ENCODE measurements at regions of chr15 and their contacts with region 1.

Region 1: DNA sequence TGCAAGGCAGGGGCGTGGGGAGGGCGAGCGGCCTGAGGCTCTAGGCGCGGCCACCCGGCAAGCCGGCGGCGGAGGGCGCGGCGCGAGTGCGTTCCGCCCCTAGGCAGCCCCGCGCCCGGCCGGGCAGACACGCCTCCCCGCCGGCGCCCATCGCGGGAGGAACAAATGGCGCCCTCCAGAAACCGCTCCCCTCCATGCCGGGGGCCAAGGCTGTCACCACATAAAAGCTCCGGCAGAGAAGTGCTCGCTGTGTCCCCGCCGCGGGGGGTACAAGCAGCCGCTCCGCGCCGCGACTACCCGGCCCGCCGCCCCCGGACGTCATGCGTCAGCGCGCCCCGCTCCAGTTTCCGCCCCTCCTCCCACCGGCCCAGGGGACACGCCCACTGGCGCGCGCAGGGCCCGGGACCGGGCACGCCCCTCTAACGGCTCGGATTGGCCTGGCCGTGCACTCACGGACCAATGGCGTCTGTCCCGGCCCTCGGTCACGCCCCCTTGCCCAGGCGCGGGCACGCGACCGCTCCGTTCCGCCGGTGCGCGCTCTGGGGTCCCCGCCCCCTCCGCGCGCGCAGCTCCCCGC is 391 bp upstream of the KLF13 start:
- DNase-seq: peak; percentile 97
- ATAC-seq: peak; percentile 91
- H3K4me3 ChIP-seq: peak overlapping the region; percentile 86
- H3K27ac ChIP-seq: peak overlapping the region; percentile 92
- H3K4me1 ChIP-seq: peaks cover 7% of the 10 kb centered on the region
- H3K27me3 ChIP-seq: peaks cover under 1% of the 10 kb centered on the region; the same call in 1 of the 2 replicates
- CTCF ChIP-seq: no peak; the same call in 1 of the 2 replicates
- POLR2A ChIP-seq: peak; percentile 89; the same call in 1 of the 2 replicates
- RAD21 ChIP-seq: no peak

Region 2: DNA sequence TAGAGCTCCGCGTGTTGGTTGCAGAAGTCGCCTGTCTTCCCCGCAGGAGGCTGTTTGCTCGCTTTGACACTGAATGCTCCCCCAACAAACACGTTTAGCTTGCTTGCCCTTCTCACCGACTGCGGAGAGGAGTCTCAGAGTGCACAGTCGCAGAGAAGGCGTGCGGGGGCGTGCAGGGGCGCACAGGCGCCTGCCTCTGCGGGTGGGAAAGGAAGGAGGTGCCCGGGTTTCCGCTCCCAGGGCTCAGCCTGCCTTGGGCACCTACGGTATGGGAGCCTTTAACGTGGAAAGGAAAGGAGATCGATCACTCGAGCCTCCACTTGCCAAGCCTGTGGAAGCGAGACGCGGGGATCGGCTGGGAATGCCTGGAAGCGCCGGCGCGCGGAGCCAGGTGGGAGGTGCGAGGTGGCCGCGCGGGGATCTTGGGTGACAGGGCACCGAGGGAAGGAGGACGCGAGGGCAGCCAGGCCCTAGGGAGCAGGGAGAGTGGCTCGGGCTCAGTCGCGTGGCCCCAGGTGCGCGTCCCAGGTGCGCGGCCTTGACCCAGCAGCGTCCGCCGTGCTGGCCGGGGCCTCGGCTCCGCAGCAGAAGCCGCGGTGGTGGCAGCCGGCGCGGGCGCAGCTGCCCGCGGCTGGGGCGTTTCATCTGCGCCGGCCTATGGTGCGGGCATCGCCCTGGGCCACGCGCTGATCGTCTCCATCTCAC is 422.6 kb before region 1 on chr15 and contains the start of gene FAN1:
- CTCF ChIA-PET with region 1: no interaction called
- POLR2A ChIA-PET with region 1: no interaction called
- dilution Hi-C with region 1: no loop called
- in situ Hi-C with region 1: no loop called
- intact Hi-C with region 1: loop called (anchors 5 kb)
- DNase-seq: peak; percentile 84
- ATAC-seq: peak; percentile 99
- H3K4me3 ChIP-seq: peak within 1 kb of the TSS; percentile 69
- H3K27ac ChIP-seq: peak within 1 kb of the TSS; percentile 54
- H3K4me1 ChIP-seq: no peaks in the 10 kb centered on the region
- H3K27me3 ChIP-seq: no peaks in the 10 kb centered on the region
- CTCF ChIP-seq: no peak
- POLR2A ChIP-seq: no peak
- RAD21 ChIP-seq: no peak
- total RNA-seq, gene FAN1: 12.4 and 15.0 TPM in 2 replicates

Region 3: DNA sequence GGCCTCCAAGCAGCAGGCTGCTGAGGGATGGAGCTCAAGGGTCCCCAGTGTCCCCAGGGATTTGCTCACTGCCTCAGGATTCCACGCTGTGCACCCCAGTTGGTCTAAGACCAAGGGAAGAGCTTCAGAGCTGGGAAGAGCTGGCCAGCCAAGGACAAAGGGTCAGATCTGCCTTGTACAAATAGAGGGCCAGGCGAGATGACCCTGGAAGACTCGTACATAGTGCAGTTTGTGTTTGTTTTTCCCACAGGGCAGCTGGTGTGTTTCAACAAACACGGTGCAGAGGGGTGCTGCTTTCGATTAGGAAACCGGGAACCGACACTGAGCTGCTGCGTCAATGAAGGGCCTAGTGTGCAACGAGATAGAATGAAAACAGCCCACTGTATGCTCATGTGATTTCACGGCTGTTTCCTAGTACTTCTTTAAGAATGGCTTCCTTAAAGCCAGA is 168.6 kb before region 1 on chr15:
- CTCF ChIA-PET with region 1: no interaction called
- POLR2A ChIA-PET with region 1: no interaction called
- dilution Hi-C with region 1: no loop called
- in situ Hi-C with region 1: no loop called
- intact Hi-C with region 1: no loop called
- DNase-seq: no peak
- ATAC-seq: no peak
- H3K4me3 ChIP-seq: no peak overlapping the region
- H3K27ac ChIP-seq: no peak overlapping the region
- H3K4me1 ChIP-seq: no peaks in the 10 kb centered on the region
- H3K27me3 ChIP-seq: peaks cover 35% of the 10 kb centered on the region
- CTCF ChIP-seq: no peak
- POLR2A ChIP-seq: no peak
- RAD21 ChIP-seq: no peak

Region 4: DNA sequence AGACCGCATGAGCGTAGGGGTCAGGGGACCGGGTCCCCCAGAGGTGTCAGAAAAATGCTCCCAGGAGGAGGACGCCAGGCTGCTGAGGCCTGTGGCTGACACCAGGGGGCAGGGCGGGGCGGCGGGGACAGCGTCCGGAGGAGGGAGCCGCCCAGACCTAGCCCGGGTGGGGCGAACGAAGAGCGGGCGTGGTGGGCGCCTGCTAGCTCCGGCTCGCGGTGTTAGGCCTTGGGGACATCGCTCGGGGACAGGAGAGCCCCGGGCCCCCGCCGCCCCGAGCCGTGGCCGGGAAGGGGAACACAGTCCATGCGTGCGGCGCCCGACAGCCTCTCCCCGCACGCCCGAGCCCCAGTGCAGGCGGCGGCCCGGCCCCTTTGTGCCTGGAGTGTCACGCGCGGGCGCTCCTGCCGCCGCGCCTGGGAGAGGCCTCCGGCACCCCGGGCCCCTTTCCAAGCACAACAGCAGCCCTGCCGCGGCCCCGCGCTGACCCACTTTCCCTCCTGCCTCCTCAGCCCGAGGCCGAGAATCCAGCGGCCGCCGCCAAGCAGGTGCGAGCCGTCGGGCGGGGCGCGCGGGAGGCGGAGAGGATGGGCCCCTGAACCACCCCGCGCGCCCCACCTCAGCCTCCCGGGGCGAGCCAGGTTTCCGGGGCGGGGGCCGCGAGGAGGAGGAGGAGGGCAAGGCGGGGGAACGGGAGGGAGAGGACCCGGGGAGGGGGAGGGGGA is 110.6 kb before region 1 on chr15:
- CTCF ChIA-PET with region 1: no interaction called
- POLR2A ChIA-PET with region 1: no interaction called
- dilution Hi-C with region 1: no loop called
- in situ Hi-C with region 1: no loop called
- intact Hi-C with region 1: loop called (anchors 5 kb)
- DNase-seq: no peak
- ATAC-seq: peak; percentile 94
- H3K4me3 ChIP-seq: peak overlapping the region; percentile 36
- H3K27ac ChIP-seq: no peak overlapping the region
- H3K4me1 ChIP-seq: peaks cover 1% of the 10 kb centered on the region; the same call in 1 of the 2 replicates
- H3K27me3 ChIP-seq: peaks cover 20% of the 10 kb centered on the region
- CTCF ChIP-seq: peak; percentile 66
- POLR2A ChIP-seq: no peak
- RAD21 ChIP-seq: peak; percentile 62

Region 5: GRCh38 chr15:31391687-31392671 is 65.7 kb after region 1 on chr15:
- CTCF ChIA-PET with region 1: no interaction called
- POLR2A ChIA-PET with region 1: no interaction called
- dilution Hi-C with region 1: no loop called
- in situ Hi-C with region 1: no loop called
- intact Hi-C with region 1: loop called (anchors 2 kb)
- DNase-seq: peak; percentile 62
- ATAC-seq: peak; percentile 91
- H3K4me3 ChIP-seq: peak overlapping the region; percentile 97
- H3K27ac ChIP-seq: peak overlapping the region; percentile 70
- H3K4me1 ChIP-seq: peaks cover 6% of the 10 kb centered on the region
- H3K27me3 ChIP-seq: no peaks in the 10 kb centered on the region
- CTCF ChIP-seq: 0 out of 2 replicates have a peak, but pooled peaks have one; percentile 4
- POLR2A ChIP-seq: peak; percentile 72
- RAD21 ChIP-seq: no peak; the same call in 1 of the 2 replicates

Region 6: GRCh38 chr15:31435261-31435911 is 109.1 kb after region 1 on chr15:
- CTCF ChIA-PET with region 1: interaction called, 4 read pairs
- POLR2A ChIA-PET with region 1: no interaction called
- dilution Hi-C with region 1: no loop called
- in situ Hi-C with region 1: no loop called
- intact Hi-C with region 1: loop called (anchors 2 kb)
- DNase-seq: peak; percentile 72
- ATAC-seq: peak; percentile 85
- H3K4me3 ChIP-seq: no peak overlapping the region
- H3K27ac ChIP-seq: peak overlapping the region; percentile 72
- H3K4me1 ChIP-seq: peaks cover 15% of the 10 kb centered on the region
- H3K27me3 ChIP-seq: no peaks in the 10 kb centered on the region
- CTCF ChIP-seq: peak; percentile 77
- POLR2A ChIP-seq: no peak
- RAD21 ChIP-seq: peak; percentile 72

Region 7: GRCh38 chr15:31472636-31473384 is 146.6 kb after region 1 on chr15:
- CTCF ChIA-PET with region 1: no interaction called
- POLR2A ChIA-PET with region 1: no interaction called
- dilution Hi-C with region 1: no loop called
- in situ Hi-C with region 1: no loop called
- intact Hi-C with region 1: loop called (anchors 5 kb)
- DNase-seq: peak; percentile 64
- ATAC-seq: peak; percentile 43
- H3K4me3 ChIP-seq: no peak overlapping the region
- H3K27ac ChIP-seq: peak overlapping the region; percentile 39
- H3K4me1 ChIP-seq: peaks cover 14% of the 10 kb centered on the region
- H3K27me3 ChIP-seq: no peaks in the 10 kb centered on the region
- CTCF ChIP-seq: no peak
- POLR2A ChIP-seq: no peak
- RAD21 ChIP-seq: no peak

Region 8: GRCh38 chr15:31523027-31523654 is 196.9 kb after region 1 on chr15:
- CTCF ChIA-PET with region 1: no interaction called
- POLR2A ChIA-PET with region 1: no interaction called
- dilution Hi-C with region 1: no loop called
- in situ Hi-C with region 1: no loop called
- intact Hi-C with region 1: no loop called
- DNase-seq: no peak
- ATAC-seq: no peak
- H3K4me3 ChIP-seq: no peak overlapping the region
- H3K27ac ChIP-seq: no peak overlapping the region
- H3K4me1 ChIP-seq: no peaks in the 10 kb centered on the region
- H3K27me3 ChIP-seq: peaks cover 15% of the 10 kb centered on the region
- CTCF ChIP-seq: no peak
- POLR2A ChIP-seq: no peak
- RAD21 ChIP-seq: no peak